Posterior vena cava (tissue), 2 donors: ENCODE measurements at regions of chr5 and their contacts with region 1.

Region 1: DNA sequence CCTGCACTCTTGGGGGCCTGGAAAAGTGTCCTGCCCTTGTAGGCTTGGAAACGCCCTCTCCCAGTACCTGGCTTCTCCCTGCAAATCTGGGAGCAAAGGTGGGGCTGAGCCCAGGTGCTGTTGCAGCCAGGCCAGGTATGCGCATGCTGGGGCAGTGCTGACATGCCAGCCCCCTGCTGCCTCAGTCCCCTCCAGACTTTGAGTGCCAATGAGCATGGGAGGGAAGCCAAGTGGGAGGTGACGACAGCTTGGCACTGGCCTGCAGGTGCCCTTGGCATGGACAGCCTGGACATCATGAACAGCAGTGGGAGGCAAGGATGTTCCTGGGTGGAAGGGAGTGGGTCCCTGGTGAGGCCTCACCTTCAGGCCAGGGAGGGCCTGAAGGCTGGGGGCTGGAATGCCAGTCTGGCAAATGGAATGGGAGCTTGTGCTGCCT is 1494.4 kb upstream of the NUDT12 start:
- DNase-seq: no peak

Region 2: GRCh38 chr5:105015098-105015497 is 41.9 kb before region 1 on chr5:
- intact Hi-C with region 1: loop called in 1 of 2 experiments (anchors 2 kb)
- DNase-seq: no peak

Region 3: DNA sequence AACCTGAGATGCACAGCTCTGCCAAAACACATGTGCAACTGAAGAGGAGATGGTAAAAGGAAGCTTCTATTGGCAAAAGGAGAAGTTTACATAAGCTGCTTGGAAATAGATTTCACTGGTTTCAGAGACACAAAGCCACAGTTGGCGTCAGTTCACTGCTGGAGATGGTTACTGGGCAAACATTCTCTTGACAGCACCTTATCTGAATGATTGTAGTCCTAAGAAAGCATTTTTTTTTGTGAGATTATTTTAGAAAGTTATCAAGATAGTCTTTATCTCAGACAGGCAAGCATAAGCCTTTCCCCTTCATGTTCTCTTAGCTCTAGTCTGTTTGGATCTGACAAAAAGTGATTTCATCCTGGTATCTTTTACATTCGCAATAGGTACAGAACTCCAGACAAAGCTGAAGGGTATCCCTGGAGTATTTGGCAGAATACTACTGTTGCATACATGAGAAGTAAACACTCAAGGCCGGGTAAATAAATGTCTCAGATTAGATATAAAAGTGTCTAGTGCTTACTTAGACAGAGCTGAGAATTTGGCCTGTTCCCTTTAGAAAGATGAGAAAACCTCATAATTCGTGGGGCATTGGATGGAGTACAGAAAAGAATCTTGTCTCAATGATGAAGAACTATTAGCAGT is 173.6 kb after region 1 on chr5:
- intact Hi-C with region 1: no loop called
- DNase-seq: no peak